PC-3 (cell line): ENCODE measurements at regions of chr1 and their contacts with region 1.

Region 1: GRCh38 chr1:111720274-111720976 is 18.8 kb downstream of the INKA2 start:
- DNase-seq: no peak
- ATAC-seq: no peak
- H3K4me3 ChIP-seq: no peak overlapping the region
- H3K27ac ChIP-seq: no peak overlapping the region
- H3K4me1 ChIP-seq: peaks cover 15% of the 10 kb centered on the region
- H3K27me3 ChIP-seq: no peaks in the 10 kb centered on the region
- CTCF ChIP-seq: no peak

Region 2: DNA sequence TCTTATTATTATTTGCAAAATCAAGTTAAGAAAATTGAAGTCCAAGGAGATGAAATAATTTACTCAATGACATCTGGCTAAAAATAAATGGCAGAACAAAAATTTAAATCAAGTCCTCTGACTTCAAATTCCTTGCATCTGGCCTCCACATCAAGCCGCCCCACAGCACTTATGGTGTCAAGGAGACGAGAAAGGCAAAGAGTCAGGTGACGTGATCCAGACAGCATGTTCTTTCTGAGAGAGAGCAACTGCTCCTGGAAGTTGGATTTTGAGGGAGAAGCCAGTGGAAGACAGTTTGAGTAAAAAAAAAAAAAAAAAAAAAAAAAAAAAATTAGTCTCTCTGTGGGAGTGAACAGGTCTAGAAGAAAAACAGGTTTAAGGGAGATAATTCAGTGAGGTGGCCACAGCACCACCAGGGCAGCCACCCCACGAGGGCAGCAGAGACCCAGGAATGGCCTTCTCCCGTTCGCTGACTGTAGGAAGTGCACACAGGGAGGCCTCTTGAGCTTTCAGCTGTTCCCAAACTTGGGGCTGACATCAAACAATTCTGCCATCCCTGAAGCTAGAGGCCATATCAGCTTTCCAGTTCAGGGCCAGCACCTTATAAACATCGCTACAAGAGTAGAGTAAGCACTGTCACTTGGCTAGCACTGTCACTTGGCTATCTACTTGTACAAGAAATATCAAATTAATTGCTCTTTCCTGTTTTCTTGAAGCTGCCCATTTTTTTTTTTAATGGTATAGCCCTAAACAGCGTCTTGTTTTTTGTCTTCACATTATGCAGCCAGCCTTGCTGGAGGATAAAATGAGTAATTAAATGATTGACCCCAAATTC is 238.8 kb before region 1 on chr1:
- CTCF ChIA-PET with region 1: no interaction called
- POLR2A ChIA-PET with region 1: no interaction called
- intact Hi-C with region 1: loop called (anchors 2 kb)
- DNase-seq: peak; percentile 81
- ATAC-seq: peak; percentile 96
- H3K4me3 ChIP-seq: no peak overlapping the region
- H3K27ac ChIP-seq: no peak overlapping the region
- H3K4me1 ChIP-seq: peaks cover 4% of the 10 kb centered on the region
- H3K27me3 ChIP-seq: no peaks in the 10 kb centered on the region
- CTCF ChIP-seq: peak; percentile 84

Region 3: DNA sequence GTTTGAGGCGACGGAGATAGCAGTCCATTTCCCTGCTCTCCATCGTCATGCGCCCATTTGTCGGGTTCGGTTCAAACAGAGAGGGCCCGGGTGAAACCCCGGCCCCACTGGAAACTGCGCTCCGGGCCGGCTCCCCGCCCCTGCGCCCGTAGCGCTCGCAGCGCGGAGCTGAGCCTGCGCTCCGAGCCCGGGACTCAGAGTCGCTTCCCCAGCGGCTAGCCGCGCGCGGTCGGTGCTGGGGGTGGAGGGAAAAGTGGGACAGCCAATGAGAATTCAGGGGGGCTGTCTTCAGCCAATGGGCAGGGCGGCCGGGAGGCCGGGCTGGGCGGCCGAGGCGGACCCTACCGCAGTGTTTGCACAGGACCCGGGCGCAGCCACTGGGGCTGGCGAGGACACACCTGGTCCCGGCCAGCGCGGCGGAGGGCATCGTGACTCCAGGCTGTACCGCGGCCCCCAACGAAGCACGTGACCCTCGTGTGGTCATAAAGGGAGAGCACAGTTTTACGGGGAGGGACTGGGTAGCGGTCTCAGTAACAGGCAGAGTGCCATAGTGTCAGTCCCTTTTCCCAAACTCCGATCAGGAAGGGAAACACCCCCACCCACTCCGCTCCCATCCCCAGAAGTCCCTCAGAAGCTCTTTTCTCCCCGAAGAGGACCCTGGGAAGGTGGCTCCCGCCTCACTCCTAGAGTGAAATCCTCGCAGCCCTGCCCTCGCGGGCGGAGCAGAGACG is 18.9 kb after region 1 on chr1 and contains the start of gene INKA2:
- CTCF ChIA-PET with region 1: no interaction called
- POLR2A ChIA-PET with region 1: no interaction called
- intact Hi-C with region 1: loop called (anchors 2 kb)
- DNase-seq: peak; percentile 86
- ATAC-seq: peak; percentile 82
- H3K4me3 ChIP-seq: peak within 1 kb of the TSS; percentile 64
- H3K27ac ChIP-seq: no peak within 1 kb of the TSS
- H3K4me1 ChIP-seq: peaks cover 20% of the 10 kb centered on the region; the same call in 1 of the 2 replicates
- H3K27me3 ChIP-seq: no peaks in the 10 kb centered on the region
- CTCF ChIP-seq: no peak
- total RNA-seq, gene INKA2: 0.11 TPM in 1 of 2 replicates, not detected in the other

Region 4: DNA sequence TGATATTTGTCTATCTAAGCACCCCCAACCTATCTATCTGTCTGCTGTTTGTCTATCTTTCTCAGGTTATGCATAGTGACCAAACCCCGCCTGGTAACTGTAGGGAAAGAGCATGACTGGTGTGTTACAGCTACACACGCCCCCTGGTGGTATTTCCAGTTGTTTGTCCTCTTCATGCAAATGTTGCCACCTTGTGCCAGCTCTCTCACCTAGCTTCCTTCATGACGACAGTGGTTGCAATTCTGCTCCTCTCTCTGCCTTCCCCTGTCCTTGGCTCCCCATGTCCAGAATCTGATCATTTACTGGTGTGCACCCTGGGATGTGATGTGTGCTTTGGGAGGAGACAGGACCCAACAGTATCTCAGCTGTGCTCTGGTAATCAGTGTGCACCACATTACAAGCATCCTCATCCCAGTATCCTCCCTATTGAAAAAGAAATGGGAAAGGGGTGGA is 26.9 kb after region 1 on chr1:
- CTCF ChIA-PET with region 1: no interaction called
- POLR2A ChIA-PET with region 1: no interaction called
- intact Hi-C with region 1: loop called (anchors 1 kb)
- DNase-seq: peak; percentile 85
- ATAC-seq: peak; percentile 92
- H3K4me3 ChIP-seq: no peak overlapping the region
- H3K27ac ChIP-seq: no peak overlapping the region
- H3K4me1 ChIP-seq: no peaks in the 10 kb centered on the region
- H3K27me3 ChIP-seq: no peaks in the 10 kb centered on the region
- CTCF ChIP-seq: peak; percentile 84

Region 5: DNA sequence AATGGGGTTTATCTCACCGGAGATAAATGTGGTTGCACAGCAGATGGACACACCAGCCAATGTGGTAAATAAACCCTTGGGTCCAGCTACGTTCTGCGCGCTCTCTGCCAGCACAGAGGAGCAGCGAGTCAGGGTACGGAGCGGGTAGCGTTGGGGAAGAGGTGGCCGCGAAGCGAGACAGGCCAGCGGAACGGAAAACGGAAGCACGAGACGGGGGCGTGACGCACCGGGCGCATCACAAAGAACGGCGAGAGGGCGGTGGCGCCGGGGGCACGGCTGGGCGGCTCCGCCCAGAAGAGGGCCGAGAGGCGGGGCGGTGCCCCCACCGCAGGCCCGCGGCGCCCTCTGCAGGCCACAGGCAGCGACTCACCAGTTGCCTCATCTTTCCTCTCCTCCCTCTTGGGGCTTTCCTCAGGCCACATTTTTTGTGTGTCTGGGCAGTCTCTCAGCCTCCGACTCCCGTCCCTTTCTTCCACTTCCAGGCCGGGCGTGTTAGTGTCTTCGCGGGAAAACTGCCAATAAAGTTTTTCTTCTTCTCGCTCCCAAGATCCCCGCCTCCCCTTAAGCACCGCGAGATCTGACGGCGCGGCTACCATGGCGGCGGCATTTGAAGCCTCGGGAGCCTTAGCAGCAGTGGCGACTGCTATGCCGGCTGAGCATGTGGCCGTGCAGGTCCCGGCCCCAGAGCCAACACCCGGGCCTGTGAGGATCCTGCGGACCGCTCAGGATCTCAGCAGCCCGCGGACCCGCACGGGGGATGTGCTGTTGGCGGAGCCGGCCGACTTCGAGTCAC is 35.1 kb after region 1 on chr1 and contains the start of gene DDX20:
- CTCF ChIA-PET with region 1: no interaction called
- POLR2A ChIA-PET with region 1: no interaction called
- intact Hi-C with region 1: loop called (anchors 2 kb)
- DNase-seq: peak; percentile 95
- ATAC-seq: peak; percentile 86
- H3K4me3 ChIP-seq: peak within 1 kb of the TSS; percentile 82
- H3K27ac ChIP-seq: peak within 1 kb of the TSS; percentile 73
- H3K4me1 ChIP-seq: peaks cover 18% of the 10 kb centered on the region
- H3K27me3 ChIP-seq: no peaks in the 10 kb centered on the region
- CTCF ChIP-seq: peak; percentile 89
- total RNA-seq, gene DDX20: 21.6 and 22.2 TPM in 2 replicates

Region 6: DNA sequence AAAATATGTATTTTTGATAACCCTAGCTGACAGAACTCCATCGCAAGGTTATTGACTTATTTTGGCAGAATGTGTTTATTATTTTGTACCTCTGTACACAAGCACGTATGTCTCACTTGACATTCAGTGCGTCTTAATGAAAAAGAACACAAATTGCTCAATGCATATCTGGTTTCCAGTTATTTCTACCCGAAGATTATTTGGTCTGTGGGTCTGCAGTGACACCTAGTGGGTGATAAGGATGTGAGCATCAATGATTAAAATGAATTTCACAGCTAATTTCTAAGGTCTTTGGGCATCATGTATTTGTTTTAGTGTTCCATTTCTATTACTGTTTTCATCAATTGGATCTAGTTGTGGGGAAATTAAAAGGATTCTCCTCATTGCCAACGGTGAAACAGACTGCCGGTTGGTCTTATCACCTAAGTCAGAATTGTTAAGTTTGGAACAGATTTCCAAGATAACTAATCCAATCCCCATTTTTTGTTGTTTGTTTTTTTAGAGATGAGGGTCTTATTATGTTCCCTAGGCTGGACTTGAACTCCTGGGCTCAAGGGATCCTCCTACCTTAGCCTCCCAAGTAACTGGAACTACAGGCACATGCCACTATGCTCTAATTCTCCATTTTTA is 49.2 kb after region 1 on chr1:
- CTCF ChIA-PET with region 1: interaction called, 4 read pairs
- POLR2A ChIA-PET with region 1: no interaction called
- intact Hi-C with region 1: loop called (anchors 1 kb)
- DNase-seq: peak; percentile 74
- ATAC-seq: peak; percentile 65
- H3K4me3 ChIP-seq: no peak overlapping the region
- H3K27ac ChIP-seq: no peak overlapping the region
- H3K4me1 ChIP-seq: no peaks in the 10 kb centered on the region
- H3K27me3 ChIP-seq: no peaks in the 10 kb centered on the region
- CTCF ChIP-seq: peak; percentile 89

Region 7: GRCh38 chr1:112105557-112105956 is 385.1 kb after region 1 on chr1:
- CTCF ChIA-PET with region 1: no interaction called
- POLR2A ChIA-PET with region 1: no interaction called
- intact Hi-C with region 1: no loop called
- DNase-seq: no peak
- ATAC-seq: no peak
- H3K4me3 ChIP-seq: no peak overlapping the region
- H3K27ac ChIP-seq: no peak overlapping the region
- H3K4me1 ChIP-seq: no peaks in the 10 kb centered on the region
- H3K27me3 ChIP-seq: no peaks in the 10 kb centered on the region
- CTCF ChIP-seq: no peak